ENCODE measurements at regions of chr1 and their contacts with region 1.

Region 1: DNA sequence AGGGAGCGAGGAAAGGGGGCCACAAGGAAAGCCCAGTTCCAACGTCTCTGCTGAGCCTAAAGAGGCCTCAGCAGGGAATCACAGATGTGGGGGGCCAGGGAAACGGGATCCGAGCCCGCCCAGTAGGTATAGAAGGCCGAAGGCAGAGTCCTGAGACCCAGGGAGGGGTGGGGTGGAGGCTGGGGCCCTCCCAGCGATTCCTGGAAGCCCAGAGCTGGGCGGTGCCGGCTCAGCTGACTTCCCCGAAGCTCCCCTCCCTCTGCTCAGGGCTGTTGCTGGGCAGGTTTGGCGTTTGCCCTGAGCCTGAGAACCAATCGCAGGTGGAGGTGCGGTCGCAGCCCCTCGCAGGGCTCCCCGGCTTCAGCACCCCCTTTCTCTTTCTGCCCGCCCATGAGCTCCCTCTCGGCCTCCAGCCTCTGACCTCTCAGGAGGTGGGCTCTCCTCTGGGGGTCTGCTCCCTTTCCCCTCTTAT is 12.8 kb downstream of the ADAMTSL4 start:
- DNase-seq: peak; percentile 92 to 93
- H3K4me3 ChIP-seq: peak overlapping the region; percentile 46
- H3K4me3 Mint-ChIP-seq: peak overlapping the region; percentile 80
- H3K27ac Mint-ChIP-seq: peak overlapping the region; percentile 95
- H3K4me1 ChIP-seq: peaks cover 34% of the 10 kb centered on the region
- H3K4me1 Mint-ChIP-seq: peaks cover 27% of the 10 kb centered on the region
- H3K27me3 ChIP-seq: no peaks in the 10 kb centered on the region
- H3K27me3 Mint-ChIP-seq: no peaks in the 10 kb centered on the region
- CTCF ChIP-seq: no peak

Region 2: GRCh38 chr1:150532868-150533302 is 29.1 kb before region 1 on chr1:
- CTCF ChIA-PET with region 1: interaction called, 14 read pairs
- POLR2A ChIA-PET with region 1: interaction called, 3 read pairs
- intact Hi-C with region 1: no loop called
- DNase-seq: no peak
- H3K4me3 ChIP-seq: no peak overlapping the region
- H3K4me3 Mint-ChIP-seq: peak overlapping the region; percentile 66
- H3K27ac Mint-ChIP-seq: peak overlapping the region; percentile 91
- H3K4me1 ChIP-seq: peaks cover 55% of the 10 kb centered on the region
- H3K4me1 Mint-ChIP-seq: peaks cover 45% of the 10 kb centered on the region
- H3K27me3 ChIP-seq: no peaks in the 10 kb centered on the region
- H3K27me3 Mint-ChIP-seq: no peaks in the 10 kb centered on the region
- CTCF ChIP-seq: no peak

Region 3: GRCh38 chr1:150578965-150579798 is 17.2 kb after region 1 on chr1 and contains the start of gene MCL1:
- CTCF ChIA-PET with region 1: interaction called, 51 read pairs
- POLR2A ChIA-PET with region 1: interaction called, 152 read pairs
- intact Hi-C with region 1: no loop called
- DNase-seq: peak; percentile 96
- H3K4me3 ChIP-seq: peak within 1 kb of the TSS; percentile 95
- H3K4me3 Mint-ChIP-seq: peak within 1 kb of the TSS; percentile 100
- H3K27ac Mint-ChIP-seq: peak within 1 kb of the TSS; percentile 98
- H3K4me1 ChIP-seq: peaks cover 33% of the 10 kb centered on the region
- H3K4me1 Mint-ChIP-seq: peaks cover 34% of the 10 kb centered on the region
- H3K27me3 ChIP-seq: no peaks in the 10 kb centered on the region
- H3K27me3 Mint-ChIP-seq: no peaks in the 10 kb centered on the region
- CTCF ChIP-seq: peak in 1 of 2 experiments; percentile 10
- total RNA-seq, gene MCL1: 130 and 134 TPM in 2 replicates

Region 4: DNA sequence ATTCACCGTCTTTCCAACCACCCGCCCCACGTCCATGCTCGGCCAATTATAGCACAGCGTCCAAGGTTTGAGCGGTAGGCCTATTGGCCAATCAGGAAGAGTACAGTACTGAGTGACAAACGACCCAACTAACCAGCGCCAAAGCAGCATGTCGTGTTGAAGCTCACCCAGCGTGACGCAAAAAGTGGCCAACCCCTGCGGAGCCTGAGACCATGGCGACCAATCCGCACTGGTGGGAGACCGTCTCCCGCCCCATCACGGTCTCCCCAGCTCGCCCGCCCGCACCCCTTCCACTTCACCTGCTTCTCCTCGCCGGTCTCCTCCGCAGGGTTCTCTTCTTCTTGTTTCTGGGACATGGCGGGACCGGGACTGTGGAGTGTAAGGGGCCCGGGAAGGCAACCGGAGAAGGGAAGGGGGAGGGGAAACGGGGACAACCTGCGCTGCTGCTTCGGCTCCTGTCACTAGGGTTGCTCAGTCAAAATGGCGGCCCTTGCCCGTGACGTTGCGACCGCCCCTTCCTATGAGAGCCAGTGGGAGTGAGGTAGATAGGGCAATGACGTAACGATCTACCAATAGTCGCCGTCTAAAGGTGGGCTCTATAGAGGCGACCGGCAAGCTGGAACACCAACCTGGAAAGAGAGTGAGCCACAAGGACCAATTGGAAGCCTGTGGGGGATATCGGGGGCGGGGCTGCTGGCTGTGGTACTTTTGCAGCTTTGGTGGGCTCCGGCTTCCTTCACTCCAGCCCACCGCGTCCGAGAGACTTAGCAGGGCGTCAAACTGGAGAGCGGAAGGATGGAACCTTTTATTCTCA is 67.3 kb after region 1 on chr1 and contains the start of gene ENSA:
- CTCF ChIA-PET with region 1: interaction called, 20 read pairs
- POLR2A ChIA-PET with region 1: interaction called, 27 read pairs
- intact Hi-C with region 1: no loop called
- DNase-seq: peak; percentile 97 to 99
- H3K4me3 ChIP-seq: peak within 1 kb of the TSS; percentile 56
- H3K4me3 Mint-ChIP-seq: no peak within 1 kb of the TSS
- H3K27ac Mint-ChIP-seq: no peak within 1 kb of the TSS
- H3K4me1 ChIP-seq: peaks cover 6% of the 10 kb centered on the region
- H3K4me1 Mint-ChIP-seq: peaks cover 5% of the 10 kb centered on the region
- H3K27me3 ChIP-seq: no peaks in the 10 kb centered on the region
- H3K27me3 Mint-ChIP-seq: no peaks in the 10 kb centered on the region
- CTCF ChIP-seq: no peak
- total RNA-seq, gene ENSA: 178 TPM in 2 replicates

Region 5: GRCh38 chr1:150789396-150789795 is 227.4 kb after region 1 on chr1:
- CTCF ChIA-PET with region 1: no interaction called
- POLR2A ChIA-PET with region 1: no interaction called
- intact Hi-C with region 1: no loop called
- DNase-seq: no peak
- H3K4me3 ChIP-seq: no peak overlapping the region
- H3K4me3 Mint-ChIP-seq: no peak overlapping the region
- H3K27ac Mint-ChIP-seq: no peak overlapping the region
- H3K4me1 ChIP-seq: no peaks in the 10 kb centered on the region
- H3K4me1 Mint-ChIP-seq: peaks cover 6% of the 10 kb centered on the region
- H3K27me3 ChIP-seq: no peaks in the 10 kb centered on the region
- H3K27me3 Mint-ChIP-seq: no peaks in the 10 kb centered on the region
- CTCF ChIP-seq: no peak

Region 6: GRCh38 chr1:150813058-150813707 is 251.2 kb after region 1 on chr1:
- CTCF ChIA-PET with region 1: interaction called, 36 read pairs
- POLR2A ChIA-PET with region 1: no interaction called
- intact Hi-C with region 1: loop called (anchors 1 kb)
- DNase-seq: peak; percentile 70 to 79
- H3K4me3 ChIP-seq: no peak overlapping the region
- H3K4me3 Mint-ChIP-seq: no peak overlapping the region
- H3K27ac Mint-ChIP-seq: no peak overlapping the region
- H3K4me1 ChIP-seq: peaks cover 27% of the 10 kb centered on the region
- H3K4me1 Mint-ChIP-seq: no peaks in the 10 kb centered on the region
- H3K27me3 ChIP-seq: no peaks in the 10 kb centered on the region
- H3K27me3 Mint-ChIP-seq: no peaks in the 10 kb centered on the region
- CTCF ChIP-seq: peak; percentile 63 to 82

Region 7: DNA sequence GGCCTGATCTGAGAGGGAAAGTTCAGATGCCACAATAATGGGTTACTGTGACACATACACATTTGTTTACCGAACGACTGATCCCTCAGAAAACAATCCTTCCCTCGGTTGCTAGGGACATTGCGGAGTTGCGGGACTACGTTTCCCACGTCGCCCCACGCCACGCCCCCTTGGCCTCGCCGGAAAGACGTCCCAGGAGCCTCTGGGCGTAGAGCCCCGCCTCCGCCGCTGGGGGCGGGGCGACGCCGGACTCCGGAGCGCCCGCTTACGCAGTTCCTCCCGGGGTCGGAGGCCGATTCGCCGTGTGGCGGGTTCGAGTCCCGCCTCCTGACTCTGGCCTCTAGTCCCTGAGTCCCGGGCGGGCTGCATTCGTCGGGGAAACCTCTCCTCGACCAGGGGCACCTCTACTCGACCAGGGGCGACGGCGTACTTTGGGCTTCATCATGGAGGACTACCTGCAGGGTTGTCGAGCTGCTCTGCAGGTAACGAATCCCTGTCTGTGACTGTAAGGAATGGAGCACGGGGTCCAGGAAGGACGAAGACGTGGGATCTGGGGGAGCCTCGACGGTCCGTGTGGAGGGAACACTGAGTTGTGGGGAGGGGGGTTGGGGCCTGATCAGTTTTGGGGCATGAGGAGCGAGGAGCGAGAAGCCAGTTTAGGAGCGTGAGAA is 446.3 kb after region 1 on chr1 and contains the start of gene PRUNE1:
- CTCF ChIA-PET with region 1: no interaction called
- POLR2A ChIA-PET with region 1: interaction called, 3 read pairs
- intact Hi-C with region 1: loop called (anchors 10 kb)
- DNase-seq: peak; percentile 96 to 97
- H3K4me3 ChIP-seq: peak within 1 kb of the TSS; percentile 71
- H3K4me3 Mint-ChIP-seq: peak within 1 kb of the TSS; percentile 92
- H3K27ac Mint-ChIP-seq: peak within 1 kb of the TSS; percentile 99
- H3K4me1 ChIP-seq: peaks cover 46% of the 10 kb centered on the region
- H3K4me1 Mint-ChIP-seq: peaks cover 21% of the 10 kb centered on the region
- H3K27me3 ChIP-seq: no peaks in the 10 kb centered on the region
- H3K27me3 Mint-ChIP-seq: no peaks in the 10 kb centered on the region
- CTCF ChIP-seq: no peak
- total RNA-seq, gene PRUNE1: 24.2 and 24.3 TPM in 2 replicates

Measured in Caco-2 (cell line).